ENCODE measurements at regions of chr19 and their contacts with region 1.

Region 1: DNA sequence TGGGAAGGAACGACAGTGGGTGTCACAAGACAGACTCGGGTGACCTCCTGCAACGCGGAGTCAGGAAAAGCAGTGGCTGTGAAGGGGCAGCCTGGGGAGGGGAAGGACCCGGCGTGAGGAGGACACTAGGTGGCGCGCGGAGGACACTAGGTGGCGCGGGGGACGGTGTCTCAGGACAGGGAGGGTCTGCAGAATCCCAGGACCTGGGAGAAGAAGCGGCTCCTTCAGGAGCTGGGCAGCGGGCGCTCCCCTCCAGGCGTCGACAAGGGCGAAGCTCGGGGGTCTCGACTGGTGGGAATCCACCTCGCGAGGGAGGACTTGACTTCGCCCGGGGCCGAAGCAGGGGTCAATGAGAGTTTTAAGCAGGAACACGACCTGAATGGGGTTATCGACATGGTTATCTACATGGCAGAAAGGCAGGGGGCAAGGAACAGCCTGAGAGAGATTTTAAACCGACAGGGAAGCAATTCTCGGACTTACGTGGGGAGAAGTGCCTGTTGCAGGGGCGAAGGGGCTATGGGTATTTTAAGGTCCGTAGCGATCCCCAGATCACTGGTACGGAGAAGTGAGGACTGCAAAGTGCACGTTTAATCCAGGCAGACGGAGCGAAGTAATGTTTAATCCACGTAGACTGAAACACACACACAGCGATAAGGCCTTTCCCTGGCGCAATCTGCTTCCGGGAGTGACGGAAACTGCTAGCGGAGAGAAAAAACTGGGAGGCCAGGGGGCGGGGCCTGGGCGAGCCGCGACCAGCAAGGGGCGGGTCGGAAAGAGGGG is at the start of gene ZNF616:
- DNase-seq: peak; percentile 97 to 98
- H3K4me3 ChIP-seq: peak within 1 kb of the TSS; percentile 82
- H3K4me3 Mint-ChIP-seq: peak within 1 kb of the TSS; percentile 93
- H3K27ac Mint-ChIP-seq: peak within 1 kb of the TSS; percentile 96
- H3K4me1 ChIP-seq: no peaks in the 10 kb centered on the region
- H3K4me1 Mint-ChIP-seq: peaks cover 10% of the 10 kb centered on the region
- H3K27me3 ChIP-seq: no peaks in the 10 kb centered on the region
- H3K27me3 Mint-ChIP-seq: no peaks in the 10 kb centered on the region
- CTCF ChIP-seq: peak; percentile 87
- total RNA-seq, gene ZNF616: 5.7 and 7.1 TPM in 2 replicates

Region 2: DNA sequence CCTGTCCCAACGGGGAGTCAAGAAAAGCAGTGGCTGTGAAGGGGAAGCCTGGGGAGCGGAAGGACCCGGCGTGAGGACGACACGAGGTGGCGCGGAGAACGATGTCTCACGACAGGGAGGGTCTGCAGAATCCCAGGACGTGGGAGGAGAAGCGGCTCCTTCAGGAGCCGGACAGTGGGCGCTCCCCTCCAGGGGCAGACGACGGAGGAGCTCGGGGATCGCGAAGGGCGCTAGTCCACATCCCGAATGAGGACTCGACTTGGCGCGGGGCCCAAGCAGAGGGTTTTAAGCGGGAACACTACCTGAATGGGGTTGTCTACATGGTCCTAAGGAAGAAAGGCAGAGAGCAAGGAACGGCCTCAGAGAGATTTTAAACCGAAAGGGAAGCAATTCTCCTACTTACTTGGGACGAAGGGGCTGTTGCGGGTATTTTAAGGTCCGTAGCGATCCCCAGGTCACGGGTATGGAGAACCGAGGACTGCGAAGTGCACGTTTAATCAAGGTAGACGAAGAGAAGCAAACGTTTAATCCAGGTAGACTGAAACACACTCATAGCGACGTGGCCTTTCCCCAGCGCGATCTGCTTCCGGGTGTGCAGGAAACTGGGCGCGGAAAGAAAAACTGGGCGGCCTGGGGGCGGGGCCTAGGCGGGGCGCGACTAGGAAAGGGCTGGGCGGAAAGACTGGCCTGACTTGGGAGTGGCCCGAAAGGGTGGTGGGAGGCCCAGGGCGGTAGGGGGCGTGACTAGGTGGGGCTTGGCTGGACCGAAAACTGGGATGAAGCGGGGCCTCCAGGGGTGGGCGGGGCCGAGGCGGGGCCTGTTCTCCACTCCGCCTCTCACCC is 44.0 kb before region 1 on chr19 and contains the start of gene ZNF841:
- CTCF ChIA-PET with region 1: no interaction called
- POLR2A ChIA-PET with region 1: no interaction called
- intact Hi-C with region 1: loop called (anchors 2 kb)
- DNase-seq: peak; percentile 96
- H3K4me3 ChIP-seq: peak within 1 kb of the TSS; percentile 97
- H3K4me3 Mint-ChIP-seq: peak within 1 kb of the TSS; percentile 92
- H3K27ac Mint-ChIP-seq: peak within 1 kb of the TSS; percentile 92
- H3K4me1 ChIP-seq: no peaks in the 10 kb centered on the region
- H3K4me1 Mint-ChIP-seq: peaks cover 16% of the 10 kb centered on the region
- H3K27me3 ChIP-seq: no peaks in the 10 kb centered on the region
- H3K27me3 Mint-ChIP-seq: no peaks in the 10 kb centered on the region
- CTCF ChIP-seq: no peak
- total RNA-seq, gene ZNF841: 14.9 and 16.7 TPM in 2 replicates

Region 3: GRCh38 chr19:52258426-52258825 is 119.0 kb after region 1 on chr19:
- CTCF ChIA-PET with region 1: no interaction called
- POLR2A ChIA-PET with region 1: no interaction called
- intact Hi-C with region 1: no loop called
- DNase-seq: no peak
- H3K4me3 ChIP-seq: no peak overlapping the region
- H3K4me3 Mint-ChIP-seq: no peak overlapping the region
- H3K27ac Mint-ChIP-seq: no peak overlapping the region
- H3K4me1 ChIP-seq: no peaks in the 10 kb centered on the region
- H3K4me1 Mint-ChIP-seq: no peaks in the 10 kb centered on the region
- H3K27me3 ChIP-seq: no peaks in the 10 kb centered on the region
- H3K27me3 Mint-ChIP-seq: no peaks in the 10 kb centered on the region
- CTCF ChIP-seq: no peak